Transverse colon (tissue), 4 donors: ENCODE measurements at regions of chr3 and their contacts with region 1.

Region 1: DNA sequence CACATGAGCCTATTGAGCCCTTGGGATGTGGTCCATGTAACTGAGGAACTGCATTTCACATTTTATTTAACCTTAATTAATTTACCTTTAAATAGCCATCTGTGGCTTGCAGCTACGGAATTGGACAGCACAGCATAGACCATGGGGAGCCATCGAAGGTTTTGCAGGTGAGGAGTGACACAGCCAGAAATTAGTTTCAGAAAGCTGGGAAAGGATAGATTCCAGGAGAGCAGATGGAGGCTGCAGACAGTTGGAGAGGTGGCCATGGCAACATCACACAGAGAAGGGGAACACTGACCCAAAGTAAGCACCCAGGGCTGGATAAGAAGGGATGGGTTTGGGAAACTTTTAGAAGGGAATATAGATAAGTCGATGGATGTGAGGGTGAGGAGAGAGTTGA is 100.1 kb upstream of the SLC6A11 start:
- DNase-seq: no peak
- H3K4me3 ChIP-seq: no peak overlapping the region
- H3K27ac ChIP-seq: no peak overlapping the region
- H3K4me1 ChIP-seq: no peaks in the 10 kb centered on the region
- H3K27me3 ChIP-seq: peaks cover 5% of the 10 kb centered on the region
- CTCF ChIP-seq: no peak
- EP300 ChIP-seq: no peak
- POLR2A ChIP-seq: no peak

Region 2: GRCh38 chr3:10377148-10377725 is 338.6 kb before region 1 on chr3:
- in situ Hi-C with region 1: no loop called
- intact Hi-C with region 1: loop called (anchors 5 kb)
- DNase-seq: no peak
- H3K4me3 ChIP-seq: no peak overlapping the region
- H3K27ac ChIP-seq: no peak overlapping the region
- H3K4me1 ChIP-seq: no peaks in the 10 kb centered on the region
- H3K27me3 ChIP-seq: no peaks in the 10 kb centered on the region
- CTCF ChIP-seq: no peak
- EP300 ChIP-seq: no peak
- POLR2A ChIP-seq: no peak

Region 3: GRCh38 chr3:10683106-10683505 is 32.8 kb before region 1 on chr3:
- in situ Hi-C with region 1: no loop called
- intact Hi-C with region 1: no loop called
- DNase-seq: no peak
- H3K4me3 ChIP-seq: no peak overlapping the region
- H3K27ac ChIP-seq: no peak overlapping the region
- H3K4me1 ChIP-seq: no peaks in the 10 kb centered on the region
- H3K27me3 ChIP-seq: no peaks in the 10 kb centered on the region
- CTCF ChIP-seq: no peak
- EP300 ChIP-seq: no peak
- POLR2A ChIP-seq: no peak

Region 4: GRCh38 chr3:10758304-10759061 is 42.6 kb after region 1 on chr3:
- in situ Hi-C with region 1: no loop called
- intact Hi-C with region 1: no loop called
- DNase-seq: peak; percentile 29
- H3K4me3 ChIP-seq: no peak overlapping the region
- H3K27ac ChIP-seq: no peak overlapping the region
- H3K4me1 ChIP-seq: no peaks in the 10 kb centered on the region
- H3K27me3 ChIP-seq: peaks cover 12% of the 10 kb centered on the region
- CTCF ChIP-seq: peak; percentile 53 to 63 (median 58)
- EP300 ChIP-seq: no peak
- POLR2A ChIP-seq: no peak

Region 5: GRCh38 chr3:12613250-12613649 is 1897.4 kb after region 1 on chr3:
- in situ Hi-C with region 1: no loop called
- intact Hi-C with region 1: loop called (anchors 5 kb)
- DNase-seq: no peak
- H3K4me3 ChIP-seq: no peak overlapping the region
- H3K27ac ChIP-seq: no peak overlapping the region
- H3K4me1 ChIP-seq: no peaks in the 10 kb centered on the region
- H3K27me3 ChIP-seq: no peaks in the 10 kb centered on the region
- CTCF ChIP-seq: no peak
- EP300 ChIP-seq: no peak
- POLR2A ChIP-seq: no peak